Ascending aorta (tissue), 2 donors: ENCODE measurements at regions of chr4 and their contacts with region 1.

Region 1: DNA sequence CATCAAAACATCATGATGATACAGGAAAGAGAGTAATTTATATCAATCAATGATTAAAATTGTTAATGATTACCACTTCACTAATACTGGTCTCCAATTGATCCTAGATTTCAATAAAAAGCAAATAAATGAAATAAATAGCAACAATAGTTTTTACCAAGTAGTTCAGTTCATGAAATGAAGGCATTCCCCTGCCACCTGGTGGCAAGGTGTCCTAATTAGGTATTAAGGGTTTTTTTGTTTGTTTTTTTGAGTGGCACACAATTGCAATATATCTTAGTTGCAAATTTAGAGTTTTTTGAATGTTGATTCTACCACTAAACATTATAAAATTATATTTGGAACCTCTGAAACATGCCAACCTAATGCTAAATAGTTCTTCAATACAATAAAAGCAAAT is 157.4 kb upstream of the PDE5A start:
- DNase-seq: no peak
- H3K4me3 ChIP-seq: no peak overlapping the region
- H3K27ac ChIP-seq: no peak overlapping the region
- H3K4me1 ChIP-seq: no peaks in the 10 kb centered on the region
- H3K27me3 ChIP-seq: no peaks in the 10 kb centered on the region
- CTCF ChIP-seq: peak in 2 of 3 experiments; percentile 16 to 47

Region 2: DNA sequence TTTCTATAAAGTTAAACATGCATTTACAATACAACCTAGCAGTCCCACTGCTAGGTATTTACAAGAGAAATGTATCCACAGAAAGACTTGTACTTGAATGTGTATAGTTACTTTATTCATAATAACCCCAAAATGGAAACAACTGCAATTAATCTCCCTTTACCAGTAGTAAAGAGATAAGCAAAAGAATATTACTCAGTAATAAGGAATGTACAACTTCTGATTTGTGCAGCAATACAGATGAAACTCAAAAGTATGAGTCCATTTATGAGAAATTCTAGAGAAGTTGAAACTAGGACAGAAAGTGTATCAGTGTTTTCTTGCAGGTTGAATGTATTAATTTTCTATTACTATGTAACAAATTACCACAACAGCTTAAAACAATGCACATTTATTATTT is 558.3 kb before region 1 on chr4:
- intact Hi-C with region 1: no loop called
- DNase-seq: no peak
- H3K4me3 ChIP-seq: no peak overlapping the region
- H3K27ac ChIP-seq: no peak overlapping the region
- H3K4me1 ChIP-seq: no peaks in the 10 kb centered on the region
- H3K27me3 ChIP-seq: no peaks in the 10 kb centered on the region
- CTCF ChIP-seq: no peak

Region 3: DNA sequence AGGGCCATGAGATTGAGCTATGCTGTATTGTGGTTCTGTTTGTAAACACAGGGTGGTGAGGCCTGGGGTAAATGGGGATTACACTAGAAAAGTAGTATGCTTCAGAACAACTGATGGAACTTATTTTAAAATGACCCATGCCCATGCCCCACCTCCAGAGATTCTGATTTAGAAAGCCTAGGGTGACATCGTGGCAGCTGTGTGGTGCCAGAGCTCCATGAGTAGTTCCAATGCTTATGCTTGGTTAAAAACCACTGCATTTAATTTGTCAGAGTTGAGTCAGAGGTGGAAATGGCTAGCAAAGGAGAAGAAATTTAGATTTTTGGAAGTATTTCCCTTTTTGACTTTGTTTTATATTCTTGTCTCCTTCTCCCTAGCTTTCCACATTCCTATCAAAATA is 94.0 kb before region 1 on chr4:
- intact Hi-C with region 1: loop called (anchors 5 kb)
- DNase-seq: peak in 1 of 2 donors; percentile 74
- H3K4me3 ChIP-seq: no peak overlapping the region
- H3K27ac ChIP-seq: peak overlapping the region in 1 of 2 donors; percentile 54
- H3K4me1 ChIP-seq: peaks cover 0 to 3% of the 10 kb centered on the region in 2 donors
- H3K27me3 ChIP-seq: no peaks in the 10 kb centered on the region
- CTCF ChIP-seq: peak; percentile 46 to 66 (median 48)